ENCODE measurements at regions of chr3 and their contacts with region 1.

Region 1: DNA sequence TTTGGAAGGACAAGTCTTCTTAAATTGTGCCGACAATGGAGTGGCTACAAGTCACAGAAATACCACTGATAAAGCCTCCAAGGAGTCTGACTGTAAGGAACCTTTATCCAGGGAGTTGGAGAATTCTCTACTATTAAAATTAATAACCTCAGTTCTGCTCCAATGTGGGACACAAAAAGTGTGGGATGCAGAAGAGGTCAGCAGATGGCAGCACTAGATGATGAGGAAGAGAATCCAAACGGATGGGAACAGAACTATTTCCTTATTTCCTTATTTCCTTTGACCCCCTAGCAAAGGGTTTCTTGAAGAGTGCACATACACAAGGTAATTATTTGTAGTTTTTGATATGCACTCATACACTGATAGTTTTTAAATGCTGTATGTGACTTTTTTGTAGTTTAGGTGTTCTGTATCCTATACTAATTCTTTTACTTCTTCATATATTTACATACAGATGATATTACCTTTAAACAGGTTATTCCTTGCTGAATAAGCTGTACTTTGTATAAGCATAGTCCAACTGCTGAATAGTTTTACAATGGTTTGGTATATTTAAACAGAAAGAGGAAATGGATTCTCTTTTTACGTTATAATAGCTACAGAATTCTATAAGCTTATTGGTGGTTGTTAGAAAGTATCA is 25.6 kb upstream of the NLGN1 start:
- DNase-seq: no peak
- H3K4me3 ChIP-seq: no peak overlapping the region
- H3K27ac ChIP-seq: no peak overlapping the region
- H3K4me1 ChIP-seq: no peaks in the 10 kb centered on the region
- H3K27me3 ChIP-seq: no peaks in the 10 kb centered on the region
- CTCF ChIP-seq: peak; percentile 64 to 81 (median 80)
- EP300 ChIP-seq: no peak
- POLR2A ChIP-seq: no peak

Region 2: DNA sequence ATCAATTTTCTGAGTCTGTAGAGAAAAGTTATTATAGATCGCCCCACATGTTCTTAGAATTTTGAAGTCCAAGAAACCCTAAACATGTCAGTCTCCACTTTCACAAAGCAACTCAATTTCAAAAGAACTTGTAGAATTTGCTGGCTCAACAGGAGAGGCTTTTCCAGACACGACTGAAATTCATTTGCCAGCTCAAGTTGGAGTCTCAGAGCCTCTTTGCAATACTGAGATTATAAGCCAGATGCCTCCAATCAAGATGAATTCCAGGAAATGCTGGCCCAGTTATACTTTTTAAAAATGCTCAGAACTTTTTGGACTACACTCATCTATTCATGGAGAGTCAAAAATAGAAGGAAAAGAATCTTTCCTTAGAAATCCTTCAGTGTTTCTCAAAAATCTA is 31.3 kb before region 1 on chr3:
- intact Hi-C with region 1: no loop called
- DNase-seq: no peak
- H3K4me3 ChIP-seq: no peak overlapping the region
- H3K27ac ChIP-seq: no peak overlapping the region
- H3K4me1 ChIP-seq: no peaks in the 10 kb centered on the region
- H3K27me3 ChIP-seq: no peaks in the 10 kb centered on the region
- CTCF ChIP-seq: no peak
- EP300 ChIP-seq: no peak
- POLR2A ChIP-seq: no peak

Region 3: DNA sequence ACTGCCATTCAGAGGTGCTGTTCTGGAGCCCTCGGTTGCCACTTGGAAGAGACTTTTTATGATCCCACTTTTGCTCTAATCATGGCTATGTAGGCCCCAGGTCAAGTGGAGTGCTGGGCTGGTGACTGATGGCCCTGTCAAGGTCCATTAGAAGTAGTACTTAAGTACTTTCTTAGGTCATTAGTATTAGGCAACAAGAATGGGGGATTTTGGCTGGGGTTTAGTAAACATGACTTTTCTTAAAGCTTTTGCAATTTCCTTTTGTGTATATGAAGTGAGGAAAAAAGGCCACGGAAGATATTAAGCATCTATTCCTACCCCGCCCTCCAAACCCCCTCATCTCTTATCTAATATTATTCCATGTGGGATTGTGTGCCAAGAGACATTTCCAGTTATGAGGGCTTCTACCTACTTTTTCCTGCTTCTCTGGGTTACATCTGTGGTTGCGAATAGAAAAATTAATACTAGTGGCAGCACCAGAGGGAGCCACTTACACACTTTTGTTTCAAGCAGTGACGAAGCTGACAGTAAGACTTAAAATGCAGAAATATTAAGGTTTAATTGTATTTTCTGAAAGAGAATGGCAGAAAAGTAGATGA is 39.5 kb after region 1 on chr3:
- intact Hi-C with region 1: loop called (anchors 5 kb)
- DNase-seq: no peak
- H3K4me3 ChIP-seq: peak overlapping the region; percentile 12 to 37 (median 24)
- H3K27ac ChIP-seq: no peak overlapping the region
- H3K4me1 ChIP-seq: peaks cover 6 to 17% (median 8%) of the 10 kb centered on the region in 4 donors
- H3K27me3 ChIP-seq: no peaks in the 10 kb centered on the region
- CTCF ChIP-seq: peak; percentile 49 to 53 (median 53)
- EP300 ChIP-seq: no peak
- POLR2A ChIP-seq: no peak

Region 4: DNA sequence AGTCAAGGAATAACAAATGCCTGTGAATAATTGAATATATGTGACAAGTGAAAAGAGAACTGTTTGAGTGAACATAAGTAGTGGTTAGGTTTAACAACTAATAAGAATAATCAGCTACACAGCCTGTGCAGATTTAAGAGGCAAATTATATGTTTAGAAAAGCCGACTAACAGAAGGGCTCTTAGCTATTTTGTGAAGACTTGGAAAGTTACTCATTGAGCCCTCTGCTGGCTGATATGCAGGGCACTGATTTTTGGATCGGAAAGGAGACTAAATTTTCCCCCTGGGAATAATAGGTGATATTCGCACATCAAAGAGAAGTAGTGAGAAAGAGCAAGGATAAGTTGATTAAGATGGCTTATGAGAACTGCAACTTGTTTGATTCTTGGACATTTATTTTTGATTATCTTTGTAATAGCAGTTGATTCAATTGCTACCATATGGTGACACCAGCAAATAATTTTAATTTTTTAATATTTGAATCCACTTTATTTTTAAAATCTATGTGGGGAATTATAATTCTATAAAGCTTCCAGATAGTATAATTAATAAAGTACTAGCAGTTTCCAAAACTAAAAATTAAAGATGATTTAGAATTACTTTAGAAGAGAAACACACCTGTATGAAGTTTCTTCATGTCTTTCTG is 181.8 kb after region 1 on chr3:
- intact Hi-C with region 1: loop called (anchors 2 kb)
- DNase-seq: no peak
- H3K4me3 ChIP-seq: no peak overlapping the region
- H3K27ac ChIP-seq: no peak overlapping the region
- H3K4me1 ChIP-seq: peaks cover 0 to 6% (median 0%) of the 10 kb centered on the region in 4 donors
- H3K27me3 ChIP-seq: no peaks in the 10 kb centered on the region
- CTCF ChIP-seq: peak; percentile 65 to 80 (median 67)
- EP300 ChIP-seq: no peak
- POLR2A ChIP-seq: no peak